ENCODE measurements at regions of chr1 and their contacts with region 1.

Region 1: DNA sequence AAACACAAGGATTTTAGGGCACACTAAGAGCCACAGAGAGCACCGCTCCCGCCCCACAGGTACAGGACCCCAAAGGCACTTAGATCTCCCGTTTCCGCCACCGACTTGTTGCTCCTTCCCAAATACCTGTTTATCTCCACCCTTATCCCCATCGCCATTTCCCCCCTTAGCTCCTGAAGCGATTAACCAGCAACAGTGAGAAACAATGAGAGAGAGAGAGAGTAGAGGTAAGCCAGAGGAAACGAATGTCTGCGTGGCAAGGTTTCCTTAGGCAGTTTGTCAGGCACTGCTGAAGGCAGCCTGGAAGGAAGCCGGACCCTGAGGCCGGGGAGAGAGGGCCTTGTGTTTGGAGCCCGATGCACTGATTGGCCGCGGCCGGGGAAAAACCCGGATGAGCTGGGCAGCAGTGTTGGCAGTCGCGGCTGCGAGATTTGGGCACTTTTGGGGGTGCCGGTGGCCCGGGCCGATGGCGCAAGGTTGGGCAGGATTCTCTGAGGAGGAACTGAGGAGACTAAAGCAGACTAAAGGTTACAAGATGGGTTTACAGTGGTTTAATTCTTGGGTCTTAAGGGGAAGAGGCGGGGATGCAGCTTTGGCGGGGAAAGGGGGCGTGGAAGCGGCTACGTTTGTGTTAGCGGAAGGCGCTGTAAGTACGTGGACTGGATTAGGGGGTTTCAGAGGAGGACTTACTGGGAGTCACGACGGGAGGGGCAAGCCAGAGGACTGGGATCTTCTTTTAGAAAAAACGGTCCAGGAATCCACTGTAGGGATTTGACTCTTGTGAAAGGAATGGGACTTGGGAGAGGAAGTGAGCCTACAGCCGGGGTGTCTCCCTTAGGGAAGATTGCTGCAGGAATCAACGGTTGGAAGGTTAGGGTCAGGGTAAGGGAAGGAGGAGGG is at the start of gene GORAB:
- DNase-seq: peak; percentile 90
- H3K4me3 ChIP-seq: peak within 1 kb of the TSS; percentile 97
- H3K27ac ChIP-seq: peak within 1 kb of the TSS; percentile 68
- H3K4me1 ChIP-seq: peaks cover 16% of the 10 kb centered on the region
- CTCF ChIP-seq: no peak
- total RNA-seq, gene GORAB: 11.5 and 19.8 TPM in 2 replicates

Region 2: DNA sequence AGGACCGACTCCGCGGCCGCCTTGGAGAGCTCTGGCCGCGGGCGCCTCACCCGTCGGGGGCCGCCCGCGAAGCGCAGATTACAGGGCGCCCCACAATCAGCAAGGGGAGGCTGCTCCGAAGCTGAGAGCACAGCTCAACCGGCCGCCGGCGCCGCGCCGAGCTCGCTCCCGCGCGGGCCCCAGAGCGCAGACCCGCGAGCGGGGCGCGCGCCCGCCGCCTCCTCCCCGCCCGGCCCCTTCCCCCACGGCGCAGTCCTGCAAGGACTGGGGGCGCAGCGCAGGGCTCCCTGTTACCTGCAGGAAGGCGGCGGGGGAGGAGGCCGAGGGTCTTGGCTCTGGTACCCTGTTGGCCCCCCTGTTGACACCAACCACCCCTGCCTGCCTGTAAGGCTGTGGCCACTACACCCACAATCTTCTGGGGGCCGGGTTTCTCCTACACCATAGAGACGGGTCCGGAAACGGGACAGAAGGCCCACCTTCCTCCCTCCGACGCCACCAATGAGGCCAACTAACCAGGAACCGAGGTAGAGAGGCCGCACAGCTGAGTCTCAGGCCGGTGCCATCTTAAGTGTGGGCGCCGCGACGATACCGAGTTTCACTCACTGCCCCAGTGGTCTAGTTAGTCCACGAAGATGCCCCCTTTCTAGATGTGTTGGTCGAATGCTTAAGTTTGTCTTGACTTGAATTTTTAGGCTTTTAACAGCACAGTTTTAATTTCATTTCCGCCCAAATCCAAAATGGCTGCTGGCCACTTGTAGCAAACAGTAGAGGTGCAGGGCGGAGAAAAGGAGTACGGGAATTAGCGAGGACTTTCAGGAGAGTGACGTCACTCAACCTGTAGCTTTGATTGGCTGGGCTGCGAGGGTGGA is 638.3 kb before region 1 on chr1 and contains the start of gene SCYL3:
- CTCF ChIA-PET with region 1: no interaction called
- POLR2A ChIA-PET with region 1: interaction called, 3 read pairs
- intact Hi-C with region 1: loop called (anchors 5 kb)
- DNase-seq: peak; percentile 98
- H3K4me3 ChIP-seq: peak within 1 kb of the TSS; percentile 81
- H3K27ac ChIP-seq: peak within 1 kb of the TSS; percentile 64
- H3K4me1 ChIP-seq: peaks cover 27% of the 10 kb centered on the region
- CTCF ChIP-seq: no peak
- total RNA-seq, gene SCYL3: 5.9 and 7.3 TPM in 2 replicates

Region 3: DNA sequence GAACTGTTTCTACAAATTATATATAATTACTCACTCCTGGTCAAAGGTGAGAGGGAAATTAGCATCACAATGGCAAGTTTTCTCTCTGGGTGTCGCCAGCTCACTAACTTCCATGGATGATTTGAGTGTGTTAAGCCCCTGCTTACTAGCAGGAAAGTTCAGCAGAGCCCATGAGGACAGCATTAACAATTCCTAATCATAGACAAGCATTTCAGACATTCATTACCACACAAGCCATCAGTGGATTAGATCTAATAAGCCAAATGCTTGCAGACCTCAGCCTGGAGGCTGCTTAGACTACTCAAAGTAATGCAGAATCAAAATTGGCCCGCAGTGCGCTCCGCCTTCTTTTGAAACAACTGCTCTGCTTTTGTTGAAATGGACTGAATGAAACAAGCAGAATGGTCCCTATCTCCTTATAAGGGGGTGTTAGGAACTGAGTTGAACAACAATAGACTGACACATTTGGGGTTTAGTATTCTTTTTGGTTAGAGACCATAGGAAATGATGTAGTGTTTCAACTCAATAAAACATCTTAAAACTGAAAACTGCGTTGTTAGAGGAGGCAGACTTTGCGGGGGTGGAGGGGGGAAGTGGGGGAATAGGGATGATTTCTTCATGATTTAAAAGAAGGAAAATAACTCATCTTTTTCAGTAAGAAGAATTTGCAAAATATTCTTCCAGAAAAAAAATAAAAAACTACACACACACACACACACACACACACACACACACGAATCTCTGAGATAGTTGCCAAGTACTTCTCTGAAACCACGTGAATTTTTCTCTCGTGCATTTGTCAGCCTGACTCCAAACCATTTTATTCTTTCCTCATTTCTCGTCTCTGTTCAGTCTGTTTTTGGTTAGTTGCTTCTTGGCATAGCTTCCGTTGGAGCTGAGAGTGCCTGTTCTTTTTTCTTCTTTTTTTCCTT is 54.6 kb after region 1 on chr1:
- CTCF ChIA-PET with region 1: no interaction called
- POLR2A ChIA-PET with region 1: no interaction called
- intact Hi-C with region 1: no loop called
- DNase-seq: no peak
- H3K4me3 ChIP-seq: no peak overlapping the region
- H3K27ac ChIP-seq: no peak overlapping the region
- H3K4me1 ChIP-seq: no peaks in the 10 kb centered on the region
- CTCF ChIP-seq: no peak

Region 4: GRCh38 chr1:170993151-170993550 is 461.1 kb after region 1 on chr1:
- CTCF ChIA-PET with region 1: no interaction called
- POLR2A ChIA-PET with region 1: no interaction called
- intact Hi-C with region 1: no loop called
- DNase-seq: no peak
- H3K4me3 ChIP-seq: no peak overlapping the region
- H3K27ac ChIP-seq: no peak overlapping the region
- H3K4me1 ChIP-seq: no peaks in the 10 kb centered on the region
- CTCF ChIP-seq: no peak